ENCODE measurements at regions of chr1 and their contacts with region 1.

Region 1: GRCh38 chr1:241895013-241895412 is 47.0 kb downstream of the EXO1 start:
- DNase-seq: no peak
- H3K4me3 ChIP-seq: no peak overlapping the region
- H3K27ac ChIP-seq: no peak overlapping the region
- H3K4me1 ChIP-seq: peaks cover 3% of the 10 kb centered on the region
- H3K27me3 ChIP-seq: no peaks in the 10 kb centered on the region
- CTCF ChIP-seq: no peak
- POLR2A ChIP-seq: no peak

Region 2: DNA sequence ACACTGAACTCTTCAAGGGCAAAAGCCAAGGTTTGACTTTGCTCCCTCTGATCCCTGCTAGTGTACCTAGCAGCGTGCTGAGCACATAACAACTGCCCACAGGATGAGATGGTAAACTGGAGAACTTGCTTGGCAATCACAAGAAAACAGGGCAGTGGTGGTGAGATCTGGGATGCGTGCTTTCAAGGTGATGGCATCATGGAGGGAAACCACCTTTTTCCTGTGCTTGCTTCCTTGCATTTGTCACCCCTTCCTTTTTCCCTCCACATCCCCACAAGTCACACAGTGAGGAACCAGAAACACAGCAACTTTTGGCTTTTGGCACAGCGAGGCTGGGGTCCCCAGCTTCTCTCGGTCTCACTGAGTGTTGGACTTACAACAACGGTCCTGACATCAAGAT is 31.1 kb after region 1 on chr1:
- CTCF ChIA-PET with region 1: no interaction called
- POLR2A ChIA-PET with region 1: no interaction called
- dilution Hi-C with region 1: no loop called
- intact Hi-C with region 1: loop called (anchors 1 kb)
- DNase-seq: peak; percentile 37
- H3K4me3 ChIP-seq: no peak overlapping the region
- H3K27ac ChIP-seq: peak overlapping the region; percentile 37
- H3K4me1 ChIP-seq: peaks cover 5% of the 10 kb centered on the region
- H3K27me3 ChIP-seq: no peaks in the 10 kb centered on the region
- CTCF ChIP-seq: no peak
- POLR2A ChIP-seq: no peak

Region 3: DNA sequence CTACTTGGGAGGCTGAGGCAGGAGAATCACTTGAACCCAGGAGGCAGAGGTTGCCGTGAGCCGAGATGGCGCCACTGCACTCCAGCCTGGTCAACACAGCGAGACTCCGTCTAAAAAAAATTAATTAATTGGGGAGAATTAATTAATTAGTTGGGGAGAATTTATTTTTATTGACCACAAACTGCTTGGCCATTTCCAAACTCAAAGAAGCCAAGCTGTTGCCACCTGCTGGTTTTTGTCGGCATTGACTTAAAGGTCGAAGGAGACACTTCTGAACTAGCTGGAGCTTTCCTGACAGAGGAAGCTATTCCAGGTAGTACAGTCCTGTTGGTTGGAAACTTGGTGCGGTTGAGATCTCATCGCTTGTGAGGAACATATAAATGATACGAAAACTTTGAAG is 90.8 kb after region 1 on chr1:
- CTCF ChIA-PET with region 1: interaction called, 10 read pairs
- POLR2A ChIA-PET with region 1: no interaction called
- dilution Hi-C with region 1: no loop called
- intact Hi-C with region 1: loop called (anchors 1 kb)
- DNase-seq: peak; percentile 31
- H3K4me3 ChIP-seq: no peak overlapping the region
- H3K27ac ChIP-seq: no peak overlapping the region
- H3K4me1 ChIP-seq: no peaks in the 10 kb centered on the region
- H3K27me3 ChIP-seq: no peaks in the 10 kb centered on the region
- CTCF ChIP-seq: peak; percentile 25 to 37
- POLR2A ChIP-seq: no peak

Region 4: DNA sequence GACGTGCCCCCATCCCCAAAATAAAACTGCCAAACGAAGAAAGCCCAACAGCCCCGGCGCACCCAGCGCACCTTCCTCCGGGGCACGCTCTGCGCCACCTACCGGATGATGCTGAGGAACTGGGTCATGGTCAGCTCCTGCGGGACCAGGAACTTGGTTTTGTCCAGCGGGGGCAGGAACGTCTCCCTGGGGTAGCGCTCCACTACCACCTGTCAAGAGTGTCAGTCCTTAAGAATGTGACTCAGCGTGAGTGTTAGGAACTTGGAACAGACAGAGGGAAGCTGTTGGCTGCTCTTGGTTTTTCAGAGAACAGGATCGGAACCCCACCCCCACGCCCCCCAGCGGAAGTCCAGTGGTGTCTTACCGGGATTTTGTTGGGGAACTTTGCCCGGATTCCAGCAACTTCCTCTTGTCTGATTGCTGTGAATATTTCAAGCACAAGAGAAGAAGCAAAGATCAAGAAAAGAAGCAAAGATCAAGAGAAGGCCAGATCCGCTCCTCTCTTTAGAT is 103.5 kb after region 1 on chr1:
- CTCF ChIA-PET with region 1: interaction called, 24 read pairs
- POLR2A ChIA-PET with region 1: no interaction called
- dilution Hi-C with region 1: no loop called
- intact Hi-C with region 1: loop called (anchors 1 kb)
- DNase-seq: peak; percentile 48
- H3K4me3 ChIP-seq: peak overlapping the region in 2 of 3 experiments; percentile 22 to 53
- H3K27ac ChIP-seq: no peak overlapping the region
- H3K4me1 ChIP-seq: peaks cover 4% of the 10 kb centered on the region
- H3K27me3 ChIP-seq: no peaks in the 10 kb centered on the region
- CTCF ChIP-seq: peak; percentile 58 to 81
- POLR2A ChIP-seq: no peak

Region 5: DNA sequence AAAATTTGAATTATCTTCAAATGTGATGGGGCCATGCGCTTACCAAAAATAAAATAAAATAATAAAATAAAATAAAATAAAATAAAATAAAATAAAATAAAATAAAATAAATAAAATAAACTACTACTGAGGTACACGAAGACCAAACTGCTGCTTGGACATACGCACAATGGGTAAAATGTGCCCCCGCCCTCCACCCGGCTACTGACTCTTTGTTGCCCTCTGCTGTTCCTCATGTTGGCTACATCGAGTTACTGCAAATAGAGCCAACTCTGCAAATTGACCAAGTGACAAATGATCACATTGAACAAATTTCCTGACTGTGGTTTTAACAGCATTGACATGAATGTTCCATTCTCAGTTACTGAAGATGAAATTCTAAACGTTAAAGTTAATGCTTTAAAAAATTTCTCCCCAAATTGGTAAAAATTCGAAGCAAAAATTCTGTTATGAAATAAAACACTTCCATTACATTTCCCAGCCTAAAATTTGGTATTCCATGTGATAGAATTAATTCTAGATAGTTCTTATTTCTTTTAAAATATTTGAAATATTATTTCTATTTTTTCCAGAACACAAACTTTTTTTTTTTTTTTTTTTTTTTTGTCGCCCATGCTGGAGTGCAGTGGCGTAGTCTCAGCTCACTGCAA is 122.7 kb after region 1 on chr1:
- CTCF ChIA-PET with region 1: no interaction called
- POLR2A ChIA-PET with region 1: no interaction called
- dilution Hi-C with region 1: no loop called
- intact Hi-C with region 1: loop called (anchors 1 kb)
- DNase-seq: peak; percentile 56
- H3K4me3 ChIP-seq: no peak overlapping the region
- H3K27ac ChIP-seq: no peak overlapping the region
- H3K4me1 ChIP-seq: no peaks in the 10 kb centered on the region
- H3K27me3 ChIP-seq: no peaks in the 10 kb centered on the region
- CTCF ChIP-seq: peak; percentile 58 to 66
- POLR2A ChIP-seq: no peak

Region 6: DNA sequence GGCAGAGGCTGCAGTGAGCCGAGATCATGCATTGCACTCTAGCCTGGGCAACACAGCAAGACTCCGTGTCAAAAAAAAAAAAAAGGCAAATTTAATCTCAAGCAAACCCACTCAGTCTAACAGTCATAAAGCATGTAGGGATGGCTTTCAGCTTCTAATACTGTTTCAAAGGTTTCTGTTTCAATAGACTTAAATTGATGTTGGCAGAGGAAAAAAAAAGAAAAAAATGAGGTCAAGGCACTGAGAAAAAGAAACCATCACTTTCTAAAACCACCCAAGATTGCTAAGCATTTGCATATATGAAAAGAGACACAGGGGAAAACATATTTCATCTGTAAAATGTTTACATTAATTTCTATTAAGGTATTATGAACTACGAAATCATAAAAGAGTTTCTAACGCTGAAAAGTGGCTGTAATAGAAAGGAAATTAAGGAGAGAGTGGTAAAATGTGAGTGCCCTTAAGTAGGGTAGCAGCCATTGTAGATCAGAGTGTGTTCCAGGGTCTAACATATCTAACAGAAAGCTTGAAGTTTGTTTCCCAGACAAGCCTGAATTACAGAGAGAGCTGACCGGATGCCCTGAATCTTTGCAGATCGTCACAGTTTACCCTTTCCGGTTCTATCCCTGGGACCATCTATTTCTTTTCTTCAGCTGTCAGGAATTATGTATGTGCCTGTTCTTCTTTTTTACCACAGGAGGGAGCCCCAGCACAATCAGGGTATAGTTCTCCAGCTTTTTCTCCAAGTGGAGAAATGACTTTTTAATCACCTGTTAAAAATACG is 559.4 kb after region 1 on chr1:
- CTCF ChIA-PET with region 1: no interaction called
- POLR2A ChIA-PET with region 1: no interaction called
- dilution Hi-C with region 1: no loop called
- intact Hi-C with region 1: loop called (anchors 5 kb)
- DNase-seq: peak; percentile 37
- H3K4me3 ChIP-seq: no peak overlapping the region
- H3K27ac ChIP-seq: no peak overlapping the region
- H3K4me1 ChIP-seq: no peaks in the 10 kb centered on the region
- H3K27me3 ChIP-seq: no peaks in the 10 kb centered on the region
- CTCF ChIP-seq: peak; percentile 48 to 49
- POLR2A ChIP-seq: no peak

Measured in endothelial cell of umbilical vein (primary cell).